ENCODE measurements at regions of chr7 and their contacts with region 1.

Region 1: DNA sequence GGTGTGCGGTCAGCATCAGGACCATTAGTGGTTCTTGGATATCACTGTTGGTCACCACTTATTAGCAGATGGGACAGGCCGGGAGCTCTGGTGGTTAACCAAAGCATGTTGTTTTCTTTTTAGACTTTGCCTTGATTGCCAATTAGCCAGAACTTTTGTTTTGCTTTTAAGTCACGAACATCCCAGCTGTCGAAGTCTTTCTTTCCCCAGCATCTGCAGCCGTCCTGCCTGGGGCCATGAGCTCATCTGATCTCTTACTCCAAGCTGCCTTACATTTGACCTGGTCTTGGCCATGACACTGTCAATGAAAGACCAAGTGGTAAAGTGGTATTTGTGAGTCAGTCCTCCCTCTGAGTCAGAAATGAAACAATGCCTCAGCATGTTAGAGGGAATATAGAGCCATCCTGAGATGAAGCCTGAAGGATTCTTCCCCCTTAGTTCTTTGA is 53.9 kb upstream of the CREB5 start:
- DNase-seq: peak; percentile 89
- H3K4me3 ChIP-seq: no peak overlapping the region
- CTCF ChIP-seq: no peak

Region 2: GRCh38 chr7:28347475-28348318 is 10.7 kb before region 1 on chr7:
- CTCF ChIA-PET with region 1: interaction called, 9 read pairs
- POLR2A ChIA-PET with region 1: interaction called, 10 read pairs
- DNase-seq: peak; percentile 46
- H3K4me3 ChIP-seq: no peak overlapping the region
- CTCF ChIP-seq: no peak

Region 3: DNA sequence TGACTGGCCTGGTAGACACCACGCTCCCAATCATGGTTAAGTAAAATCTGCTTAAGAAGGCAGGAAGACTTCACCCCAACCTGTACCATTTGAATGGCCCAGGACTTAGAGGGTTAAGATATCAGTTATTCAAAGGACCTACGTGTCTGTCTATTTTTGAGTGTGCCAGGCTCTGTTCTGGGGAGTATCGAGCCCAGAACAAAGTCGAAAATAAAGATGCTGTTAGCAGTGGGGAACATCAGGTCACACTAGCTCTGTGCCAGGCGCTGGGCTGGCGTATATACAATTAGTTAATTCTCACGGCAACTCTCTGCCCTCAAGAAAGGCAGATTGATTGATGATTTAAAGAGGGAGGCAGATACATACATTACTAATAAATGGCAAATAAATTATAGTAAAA is 13.4 kb after region 1 on chr7:
- CTCF ChIA-PET with region 1: interaction called, 11 read pairs
- POLR2A ChIA-PET with region 1: no interaction called
- DNase-seq: no peak
- H3K4me3 ChIP-seq: no peak overlapping the region
- CTCF ChIP-seq: no peak

Measured in AG04449 (cell line).